A549 (cell line): ENCODE measurements at regions of chr20 and their contacts with region 1.

Region 1: DNA sequence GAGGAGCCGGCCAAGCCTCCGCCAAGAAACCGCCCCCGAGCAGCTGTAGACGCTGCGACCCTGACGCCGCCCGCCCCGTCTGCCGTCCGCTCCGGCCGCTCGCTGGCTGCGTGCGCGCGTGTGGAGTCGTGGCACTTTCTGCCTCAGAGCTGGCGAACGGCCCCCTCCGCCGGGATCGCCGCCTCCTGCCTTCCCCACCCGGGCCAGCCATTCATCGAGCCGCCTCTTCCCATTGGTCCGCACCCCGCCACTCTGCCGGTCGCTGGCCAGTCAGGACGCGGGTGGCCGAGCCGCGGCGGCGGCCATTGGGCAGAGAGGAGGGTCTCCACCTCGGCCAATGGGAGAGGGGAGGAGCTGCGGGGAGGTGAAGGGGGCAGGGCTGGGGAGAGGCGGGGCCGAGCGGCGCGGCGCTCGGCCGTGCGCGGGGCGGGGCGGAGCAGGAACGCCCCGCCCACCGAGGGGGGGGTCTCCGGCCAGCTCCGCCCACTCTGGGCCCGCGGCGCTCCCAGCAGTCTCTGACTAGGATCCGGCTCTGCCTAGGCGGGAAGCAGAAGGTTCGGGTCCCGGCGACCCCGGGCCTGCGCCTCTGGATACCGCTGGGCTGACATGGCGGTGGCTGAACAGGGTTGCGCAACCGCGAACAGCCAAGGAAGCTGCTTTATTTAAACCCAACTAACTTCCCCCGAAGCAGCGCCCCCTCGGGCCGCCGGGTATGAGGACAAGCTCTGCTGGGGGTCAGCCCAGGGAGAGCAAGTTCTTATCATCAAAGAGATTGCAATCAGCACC is at the start of gene RRBP1:
- DNase-seq: peak; percentile 98 to 99
- ATAC-seq: peak; percentile 84 to 97
- H3K4me3 ChIP-seq: peak within 1 kb of the TSS; percentile 96
- H3K27ac ChIP-seq: peak within 1 kb of the TSS; percentile 95 to 96
- H3K4me1 ChIP-seq: peaks cover 36% of the 10 kb centered on the region
- CTCF ChIP-seq: peak; percentile 89
- EP300 ChIP-seq: no peak
- POLR2A ChIP-seq: peak; percentile 98
- RAD21 ChIP-seq: peak; percentile 22 to 43; a peak in 2 of 5 replicates
- polyA plus RNA-seq, gene RRBP1: 51.6 and 56.5 TPM in 2 replicates

Region 2: DNA sequence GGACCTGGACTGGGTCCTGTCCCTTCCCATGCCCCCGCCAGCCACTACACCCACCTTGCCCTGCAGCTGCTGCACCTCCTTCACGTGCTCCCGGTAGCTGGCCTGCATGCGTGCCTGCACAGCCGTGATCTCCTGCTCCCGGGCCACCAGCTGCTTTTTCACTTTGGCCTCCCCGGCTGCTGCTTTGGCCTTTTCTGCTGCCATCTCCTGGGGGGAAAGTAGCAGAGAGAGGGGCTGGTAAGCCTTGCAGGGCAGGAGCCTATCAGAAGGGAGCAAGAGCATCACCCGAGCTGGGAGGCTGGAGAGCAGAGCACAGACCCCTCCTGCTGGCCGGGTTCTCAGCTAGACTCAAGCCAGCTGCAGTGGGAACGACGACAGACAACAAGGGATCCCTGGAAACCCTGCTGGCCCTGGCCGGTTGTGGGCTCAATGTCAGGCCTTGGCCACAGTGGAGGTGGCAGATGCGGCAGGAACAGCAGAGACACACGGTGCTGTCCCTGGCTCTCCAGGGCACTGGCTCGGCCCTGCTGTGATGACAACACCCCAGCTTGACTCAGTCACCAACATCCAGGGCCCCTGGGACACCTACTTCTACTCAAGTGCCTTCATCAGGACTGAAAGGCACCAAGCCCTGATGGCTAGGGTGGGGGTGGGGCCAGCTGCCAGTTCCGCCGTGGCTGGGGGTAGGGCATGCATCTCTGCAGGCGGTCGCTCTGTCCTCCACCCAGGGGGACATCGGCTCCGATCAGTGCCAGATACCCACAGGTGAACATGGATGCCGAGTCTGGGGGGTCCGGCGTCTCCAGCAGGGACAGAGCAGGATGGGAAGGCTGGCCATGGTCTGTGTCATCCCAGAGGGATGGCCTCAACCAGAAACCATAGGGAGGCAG is 45.5 kb before region 1 on chr20:
- CTCF ChIA-PET with region 1: interaction called, 11 read pairs
- POLR2A ChIA-PET with region 1: no interaction called
- DNase-seq: no peak
- ATAC-seq: peak in 1 of 2 experiments; percentile 32; a peak in 3 of 6 replicates
- H3K4me3 ChIP-seq: no peak overlapping the region
- H3K27ac ChIP-seq: no peak overlapping the region
- H3K4me1 ChIP-seq: no peaks in the 10 kb centered on the region
- CTCF ChIP-seq: no peak
- EP300 ChIP-seq: no peak
- POLR2A ChIP-seq: no peak
- RAD21 ChIP-seq: no peak

Region 3: DNA sequence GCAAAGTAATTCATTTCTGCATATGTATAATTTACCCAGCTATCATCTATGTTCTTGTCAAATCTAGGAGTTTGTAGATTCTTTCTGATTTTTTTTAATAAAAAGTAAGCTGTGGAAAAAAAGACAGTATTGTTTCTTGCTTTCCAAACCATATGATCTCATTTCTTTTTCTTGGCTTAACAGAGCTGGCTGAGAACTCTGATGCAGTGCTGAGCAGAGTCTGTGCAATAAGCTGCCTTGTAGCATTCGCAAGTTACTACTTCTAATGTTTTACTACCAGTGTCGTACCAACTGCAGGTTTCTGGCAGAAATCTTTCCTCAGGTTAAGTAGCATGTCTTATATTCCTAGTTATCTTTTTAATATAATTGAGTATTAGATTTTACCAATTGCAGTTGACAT is 15.8 kb before region 1 on chr20:
- CTCF ChIA-PET with region 1: interaction called, 10 read pairs
- POLR2A ChIA-PET with region 1: interaction called, 3 read pairs
- DNase-seq: no peak
- ATAC-seq: no peak
- H3K4me3 ChIP-seq: no peak overlapping the region
- H3K27ac ChIP-seq: no peak overlapping the region
- H3K4me1 ChIP-seq: peaks cover 12% of the 10 kb centered on the region
- CTCF ChIP-seq: no peak
- EP300 ChIP-seq: no peak
- POLR2A ChIP-seq: no peak
- RAD21 ChIP-seq: no peak

Region 4: GRCh38 chr20:17699931-17700657 is 17.8 kb after region 1 on chr20 and contains the start of gene BANF2:
- CTCF ChIA-PET with region 1: interaction called, 18 read pairs
- POLR2A ChIA-PET with region 1: no interaction called
- DNase-seq: no peak
- ATAC-seq: 0 out of 6 replicates have a peak, but pooled peaks of 1 of the 2 experiments have one; percentile 6
- H3K4me3 ChIP-seq: no peak within 1 kb of the TSS
- H3K27ac ChIP-seq: no peak within 1 kb of the TSS
- H3K4me1 ChIP-seq: no peaks in the 10 kb centered on the region
- CTCF ChIP-seq: no peak
- EP300 ChIP-seq: no peak
- POLR2A ChIP-seq: no peak
- RAD21 ChIP-seq: no peak
- polyA plus RNA-seq, gene BANF2: not detected in 2 replicates

Region 5: GRCh38 chr20:17898548-17898994 is 216.3 kb after region 1 on chr20:
- CTCF ChIA-PET with region 1: interaction called, 42 read pairs
- POLR2A ChIA-PET with region 1: interaction called, 8 read pairs
- DNase-seq: peak; percentile 73 to 88
- ATAC-seq: peak; percentile 69 to 82; a peak in 4 of 6 replicates
- H3K4me3 ChIP-seq: no peak overlapping the region
- H3K27ac ChIP-seq: no peak overlapping the region
- H3K4me1 ChIP-seq: peaks cover 8% of the 10 kb centered on the region; the same call in 2 of the 3 replicates
- CTCF ChIP-seq: peak; percentile 95
- EP300 ChIP-seq: no peak
- POLR2A ChIP-seq: no peak
- RAD21 ChIP-seq: peak; percentile 96 to 97

Region 6: GRCh38 chr20:17946572-17947473 is 264.5 kb after region 1 on chr20:
- CTCF ChIA-PET with region 1: interaction called, 12 read pairs
- POLR2A ChIA-PET with region 1: no interaction called
- DNase-seq: no peak
- ATAC-seq: no peak
- H3K4me3 ChIP-seq: no peak overlapping the region
- H3K27ac ChIP-seq: no peak overlapping the region
- H3K4me1 ChIP-seq: no peaks in the 10 kb centered on the region
- CTCF ChIP-seq: no peak
- EP300 ChIP-seq: no peak
- POLR2A ChIP-seq: no peak
- RAD21 ChIP-seq: no peak